Dorsolateral prefrontal cortex (tissue), 120 donors: ENCODE measurements at regions of chr19 and their contacts with region 1.

Region 1: DNA sequence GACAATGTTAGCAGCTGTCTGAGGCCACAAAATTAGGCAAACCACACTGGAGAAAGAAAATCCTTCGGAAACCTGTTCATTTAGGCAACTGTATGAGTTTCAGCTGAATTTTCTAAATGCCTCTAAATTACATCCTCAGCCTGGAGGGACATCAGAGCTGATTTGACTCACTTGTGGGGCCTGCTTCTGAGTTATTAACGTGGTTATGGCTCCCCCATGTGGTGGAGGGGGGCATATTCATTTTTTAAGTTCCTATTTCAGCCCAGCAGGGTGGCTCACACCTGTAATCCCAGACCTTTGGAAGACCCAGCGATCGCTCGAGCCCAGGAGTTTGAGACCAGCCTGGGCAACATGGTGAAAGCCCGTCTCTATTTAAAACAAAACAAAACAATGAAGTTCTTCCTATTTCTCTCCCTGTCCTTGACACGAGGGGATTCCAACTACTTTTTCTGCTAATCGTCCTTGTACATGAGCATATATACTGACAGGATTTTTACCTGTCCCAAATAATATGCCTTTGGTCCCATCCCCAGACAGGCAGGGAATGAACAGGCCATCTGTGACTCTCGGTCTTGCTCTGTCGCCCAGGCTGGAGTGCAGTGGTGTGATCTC is 31.5 kb upstream of the HIF3A start:
- DNase-seq: peak in 9 of 10 donors; percentile 39 to 75 (median 58)
- H3K4me3 ChIP-seq: no peak overlapping the region
- H3K27ac ChIP-seq: no peak overlapping the region
- H3K27me3 ChIP-seq: peaks cover 0 to 7% (median 0%) of the 10 kb centered on the region in 45 donors
- CTCF ChIP-seq: peak; percentile 78 to 98 (median 91)

Region 2: GRCh38 chr19:45947926-45948325 is 317.4 kb before region 1 on chr19:
- intact Hi-C with region 1: no loop called
- DNase-seq: no peak
- H3K4me3 ChIP-seq: no peak overlapping the region
- H3K27ac ChIP-seq: peak overlapping the region in 1 of 59 donors; percentile 33
- H3K27me3 ChIP-seq: no peaks in the 10 kb centered on the region
- CTCF ChIP-seq: no peak

Region 3: DNA sequence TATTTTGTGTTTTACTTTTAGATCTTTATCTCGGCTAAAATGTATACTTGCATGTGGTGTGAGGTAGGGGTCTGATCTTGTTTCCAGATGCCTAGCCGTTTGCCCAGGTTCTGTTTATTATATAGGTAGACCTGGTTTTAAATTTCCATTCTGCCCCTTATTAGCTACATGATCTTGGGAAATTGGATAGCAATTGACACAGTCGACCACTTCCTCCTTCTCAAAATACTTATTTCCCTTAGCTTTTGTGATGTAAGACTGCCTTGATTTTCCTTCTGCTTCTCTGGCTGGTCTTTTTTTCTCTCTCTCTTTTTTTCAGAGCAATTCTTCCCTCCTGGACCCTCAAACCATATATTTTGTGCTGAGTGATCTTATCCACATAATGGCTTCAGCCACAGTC is 239.5 kb before region 1 on chr19:
- intact Hi-C with region 1: loop called (anchors 1 to 5 kb)
- DNase-seq: no peak
- H3K4me3 ChIP-seq: no peak overlapping the region
- H3K27ac ChIP-seq: no peak overlapping the region
- H3K27me3 ChIP-seq: peaks cover 0 to 10% (median 0%) of the 10 kb centered on the region in 45 donors
- CTCF ChIP-seq: no peak

Region 4: GRCh38 chr19:46030812-46031550 is 234.3 kb before region 1 on chr19:
- intact Hi-C with region 1: loop called (anchors 1 to 5 kb)
- DNase-seq: no peak
- H3K4me3 ChIP-seq: no peak overlapping the region
- H3K27ac ChIP-seq: no peak overlapping the region
- H3K27me3 ChIP-seq: peaks cover 0 to 2% (median 0%) of the 10 kb centered on the region in 45 donors
- CTCF ChIP-seq: no peak

Region 5: DNA sequence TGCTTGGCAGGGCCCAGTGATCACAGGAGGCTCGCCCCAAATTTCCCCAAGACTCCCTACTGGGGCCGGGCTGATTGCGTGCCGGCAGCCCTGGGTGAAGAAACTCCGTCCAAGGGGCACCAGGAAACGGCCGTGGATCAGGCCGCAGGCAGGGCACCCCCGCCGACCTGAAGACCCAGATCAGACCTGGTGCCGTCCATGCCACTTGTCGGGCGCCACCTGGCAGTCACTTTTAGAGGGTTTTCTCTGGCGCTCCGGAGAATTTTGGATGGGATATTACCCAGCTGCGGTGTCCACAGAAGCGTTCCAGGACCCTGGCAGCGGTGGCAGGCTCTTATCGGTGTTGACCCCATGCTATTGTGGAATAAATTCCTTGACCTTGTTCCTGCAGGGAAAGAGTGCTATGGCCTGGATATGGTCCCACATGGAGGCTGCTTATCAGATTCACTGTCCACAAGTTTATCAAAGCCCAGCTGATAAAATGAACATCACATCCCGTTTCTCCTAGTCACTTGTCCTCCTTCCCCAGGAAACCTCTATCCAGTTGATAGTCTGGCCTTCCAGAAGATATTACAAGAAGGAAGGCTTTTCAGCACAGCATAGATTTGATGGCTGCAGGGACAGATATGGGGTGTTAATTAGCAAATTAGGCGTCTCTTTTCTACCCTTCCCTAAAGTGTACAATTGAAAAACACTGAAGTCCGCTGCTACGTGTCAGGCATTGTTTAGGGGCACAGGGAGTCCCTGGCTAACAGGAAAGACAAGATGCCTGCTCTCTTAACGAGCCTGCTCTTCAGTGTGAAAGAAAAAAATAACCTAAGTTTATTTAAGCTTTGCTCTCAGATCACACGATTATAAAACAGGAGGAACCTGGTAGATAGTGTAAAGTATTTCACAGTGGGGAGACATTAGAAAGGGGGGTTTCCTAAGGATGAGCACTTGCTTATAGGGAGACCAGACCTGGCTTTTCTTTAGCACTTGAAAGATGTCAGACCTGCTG is 78.9 kb before region 1 on chr19:
- intact Hi-C with region 1: loop called in 1 of 2 experiments (anchors 5 kb)
- DNase-seq: no peak
- H3K4me3 ChIP-seq: no peak overlapping the region
- H3K27ac ChIP-seq: no peak overlapping the region
- H3K27me3 ChIP-seq: peaks cover 0 to 3% (median 0%) of the 10 kb centered on the region in 45 donors
- CTCF ChIP-seq: no peak

Region 6: DNA sequence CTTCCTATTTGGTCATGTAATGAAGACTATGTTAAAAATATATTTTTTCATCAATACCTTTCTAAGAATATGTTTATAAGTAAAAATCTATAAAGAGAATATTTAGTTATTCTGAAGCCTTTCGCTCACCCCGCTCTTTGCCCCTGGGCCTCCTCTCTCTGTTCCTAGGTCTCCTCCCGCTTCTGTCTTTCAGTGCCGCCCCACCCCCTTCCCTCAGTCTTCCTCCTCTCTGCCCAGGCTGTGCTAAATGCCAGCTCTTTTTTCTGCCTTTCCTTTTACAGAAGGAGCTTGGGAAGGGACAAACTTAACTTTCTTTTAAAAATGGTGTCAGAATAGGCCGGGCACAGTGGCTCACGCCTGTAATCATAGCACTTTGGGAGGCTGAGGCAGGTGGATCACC is 54.3 kb after region 1 on chr19:
- intact Hi-C with region 1: no loop called
- DNase-seq: no peak
- H3K4me3 ChIP-seq: no peak overlapping the region
- H3K27ac ChIP-seq: peak overlapping the region in 27 of 59 donors; percentile 6 to 61 (median 37)
- H3K27me3 ChIP-seq: no peaks in the 10 kb centered on the region
- CTCF ChIP-seq: no peak

Region 7: DNA sequence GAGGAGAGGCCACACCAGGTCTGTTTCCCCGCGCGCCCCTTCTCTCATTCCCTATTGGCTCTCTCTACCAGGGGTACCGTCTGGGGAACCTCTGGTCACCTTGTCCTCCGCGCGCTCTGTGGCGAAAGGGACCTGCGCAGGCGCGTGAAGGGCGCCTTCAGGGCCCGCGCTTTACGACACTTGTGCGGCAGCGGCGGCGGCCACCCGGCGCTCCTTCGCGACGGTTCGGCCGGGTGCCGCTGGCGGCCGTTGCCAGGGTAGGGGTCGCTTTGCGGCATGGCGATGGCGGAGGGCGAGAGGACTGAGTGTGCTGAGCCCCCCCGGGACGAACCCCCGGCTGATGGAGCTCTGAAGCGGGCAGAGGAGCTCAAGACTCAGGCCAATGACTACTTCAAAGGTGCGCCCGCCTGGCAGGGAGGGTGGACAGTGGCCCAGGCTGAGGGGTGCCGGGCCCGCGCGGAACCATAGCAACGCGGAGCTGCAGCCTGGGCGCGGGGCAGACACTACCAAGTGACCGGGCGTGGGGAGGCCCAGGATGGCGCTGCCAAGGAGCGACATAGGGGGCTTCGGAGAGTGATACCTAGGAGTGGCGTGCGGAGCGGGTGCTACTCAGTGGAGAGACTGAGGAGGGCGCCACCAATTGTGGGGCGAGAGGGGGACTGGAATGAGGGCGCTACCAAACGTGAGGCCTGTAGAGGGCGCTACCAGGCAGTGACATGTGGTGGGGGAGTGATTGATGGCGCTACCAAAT is 81.7 kb after region 1 on chr19 and contains the start of gene PPP5C:
- intact Hi-C with region 1: no loop called
- DNase-seq: peak; percentile 70 to 93 (median 84)
- H3K4me3 ChIP-seq: peak within 1 kb of the TSS; percentile 70 to 100 (median 96)
- H3K27ac ChIP-seq: peak within 1 kb of the TSS in 57 of 59 donors; percentile 30 to 95 (median 84)
- H3K27me3 ChIP-seq: no peaks in the 10 kb centered on the region
- CTCF ChIP-seq: peak in 51 of 56 donors; percentile 20 to 72 (median 48)
- total RNA-seq, gene PPP5C: 63.9 to 137 (median 98.8) TPM